Mammary epithelial cell (primary cell): ENCODE measurements at regions of chr18 and their contacts with region 1.

Region 1: GRCh38 chr18:59783138-59783537 is 85.9 kb upstream of the CCBE1 start:
- DNase-seq: peak; percentile 47
- H3K4me3 ChIP-seq: no peak overlapping the region
- H3K27ac ChIP-seq: no peak overlapping the region
- H3K4me1 ChIP-seq: peaks cover 21% of the 10 kb centered on the region
- H3K27me3 ChIP-seq: no peaks in the 10 kb centered on the region
- CTCF ChIP-seq: peak; percentile 58 to 68

Region 2: DNA sequence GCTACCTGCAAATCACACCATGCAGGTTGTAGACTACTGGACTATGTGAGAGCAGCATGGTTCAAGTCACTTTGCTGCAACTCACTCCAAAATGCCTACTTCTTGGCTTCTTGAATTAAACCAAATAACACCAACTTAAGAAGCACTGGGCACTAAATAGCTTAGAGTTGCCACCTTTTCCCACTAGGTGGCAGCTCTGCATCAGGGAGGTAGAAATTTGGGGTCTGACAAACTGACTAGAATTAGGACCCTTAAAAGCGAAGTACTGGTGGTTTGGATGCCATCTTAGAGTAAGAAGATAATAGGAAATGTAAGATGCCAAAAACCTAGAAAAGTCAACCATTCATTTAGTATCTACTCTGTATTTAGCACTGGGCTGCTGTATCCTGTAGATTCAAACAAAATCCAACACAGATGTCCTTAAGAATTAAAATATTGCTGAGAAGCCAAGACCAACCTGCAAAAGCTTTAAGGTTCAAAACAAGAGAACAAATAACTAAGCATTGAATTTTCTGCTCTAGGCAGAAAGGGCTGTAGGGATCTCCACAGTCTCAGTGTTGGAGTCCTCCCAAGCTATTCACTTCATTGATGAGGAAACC is 151.5 kb before region 1 on chr18:
- CTCF ChIA-PET with region 1: interaction called, 4 read pairs
- dilution Hi-C with region 1: no loop called
- in situ Hi-C with region 1: no loop called
- intact Hi-C with region 1: loop called (anchors 1 kb)
- DNase-seq: peak; percentile 23
- H3K4me3 ChIP-seq: no peak overlapping the region
- H3K27ac ChIP-seq: no peak overlapping the region
- H3K4me1 ChIP-seq: no peaks in the 10 kb centered on the region
- H3K27me3 ChIP-seq: no peaks in the 10 kb centered on the region
- CTCF ChIP-seq: peak; percentile 73 to 90

Region 3: DNA sequence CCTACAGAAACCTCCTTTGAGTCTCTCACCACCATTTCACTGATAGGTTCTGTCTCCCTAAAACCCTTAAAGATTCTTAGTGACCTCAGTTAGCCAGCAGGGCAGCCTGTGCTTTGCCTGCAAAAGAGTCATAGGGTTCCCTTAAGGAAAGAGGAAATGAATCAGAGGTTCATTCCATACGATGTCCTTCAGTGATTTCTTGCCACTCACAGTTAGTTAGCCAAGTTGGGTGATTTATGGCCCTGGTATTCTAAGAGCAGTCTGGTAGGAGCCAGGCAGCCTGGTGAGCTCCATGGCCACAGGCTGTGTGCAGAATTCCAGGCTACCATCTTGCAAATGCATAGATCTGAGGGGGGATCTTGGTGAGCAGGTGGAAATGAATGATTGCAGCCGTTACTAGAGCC is 67.2 kb before region 1 on chr18:
- CTCF ChIA-PET with region 1: no interaction called
- dilution Hi-C with region 1: no loop called
- in situ Hi-C with region 1: no loop called
- intact Hi-C with region 1: loop called (anchors 2 kb)
- DNase-seq: peak; percentile 91
- H3K4me3 ChIP-seq: no peak overlapping the region
- H3K27ac ChIP-seq: no peak overlapping the region
- H3K4me1 ChIP-seq: peaks cover 45% of the 10 kb centered on the region
- H3K27me3 ChIP-seq: no peaks in the 10 kb centered on the region
- CTCF ChIP-seq: peak; percentile 3 to 25

Region 4: DNA sequence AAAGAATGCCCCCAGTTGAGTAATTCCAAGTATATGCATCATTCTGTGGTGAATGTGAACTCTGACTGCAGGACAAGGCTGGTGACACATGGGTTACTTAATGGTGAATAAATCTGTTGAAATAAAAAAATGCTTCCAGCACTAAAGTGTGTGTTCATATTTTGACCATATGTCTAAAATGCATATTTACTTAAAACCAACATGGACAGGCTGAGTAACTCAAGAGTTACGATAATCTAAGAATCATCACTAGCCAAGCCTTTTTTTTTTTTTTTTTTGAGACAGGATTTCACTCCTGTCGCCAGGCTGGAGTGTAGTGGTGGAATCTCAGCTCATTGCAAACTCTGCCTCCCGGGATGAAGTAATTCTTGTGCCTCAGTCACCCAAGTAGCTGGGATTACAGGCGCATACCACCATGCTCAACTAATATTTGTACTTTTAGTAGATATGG is 38.8 kb before region 1 on chr18:
- CTCF ChIA-PET with region 1: no interaction called
- dilution Hi-C with region 1: no loop called
- in situ Hi-C with region 1: no loop called
- intact Hi-C with region 1: loop called (anchors 5 kb)
- DNase-seq: peak; percentile 83
- H3K4me3 ChIP-seq: no peak overlapping the region
- H3K27ac ChIP-seq: peak overlapping the region; percentile 25
- H3K4me1 ChIP-seq: peaks cover 28% of the 10 kb centered on the region
- H3K27me3 ChIP-seq: no peaks in the 10 kb centered on the region
- CTCF ChIP-seq: no peak